Activated CD4-positive, alpha-beta memory T cell treated with anti-CD3 and anti-CD28 coated beads for 36 hours (primary cell): ENCODE measurements at regions of chrX and their contacts with region 1.

Region 1: GRCh38 chrX:68571610-68572311 is 72.9 kb downstream of the YIPF6 start:
- DNase-seq: peak; percentile 35
- H3K4me3 Mint-ChIP-seq: no peak overlapping the region
- H3K27ac Mint-ChIP-seq: peak overlapping the region; percentile 47
- H3K4me1 Mint-ChIP-seq: peaks cover 48% of the 10 kb centered on the region
- H3K27me3 Mint-ChIP-seq: no peaks in the 10 kb centered on the region

Region 2: DNA sequence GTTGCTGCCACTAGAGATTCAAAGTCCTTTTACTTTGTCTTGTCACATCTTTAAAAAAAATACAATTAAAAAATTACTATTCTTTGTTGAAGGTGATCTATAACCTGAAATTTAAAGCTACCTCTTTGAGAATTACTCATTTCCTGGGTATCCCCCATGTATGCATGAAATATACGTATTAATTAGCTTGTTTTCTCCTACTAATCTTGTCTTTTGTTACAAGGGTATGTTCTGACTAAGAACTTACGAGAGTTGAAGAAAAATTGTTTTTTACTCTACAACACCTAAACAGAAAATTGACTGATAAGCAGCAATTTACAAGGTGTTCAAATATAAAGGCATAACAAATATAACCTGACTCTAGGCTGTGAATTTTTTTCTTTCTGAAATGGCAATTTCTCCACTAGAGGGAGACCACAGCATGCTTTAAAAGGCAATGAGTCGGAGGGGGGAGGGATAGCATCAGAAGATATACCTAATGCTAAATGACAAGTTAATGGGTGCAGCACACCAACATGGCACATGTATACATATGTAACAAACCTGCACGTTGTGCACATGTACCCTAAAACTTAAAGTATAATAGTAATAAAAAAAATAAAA is 388.0 kb before region 1 on chrX:
- CTCF ChIA-PET with region 1: interaction called, 4 read pairs
- POLR2A ChIA-PET with region 1: no interaction called
- intact Hi-C with region 1: loop called (anchors 2 kb)
- DNase-seq: no peak
- H3K4me3 Mint-ChIP-seq: no peak overlapping the region
- H3K27ac Mint-ChIP-seq: no peak overlapping the region
- H3K4me1 Mint-ChIP-seq: peaks cover 38% of the 10 kb centered on the region
- H3K27me3 Mint-ChIP-seq: no peaks in the 10 kb centered on the region

Region 3: DNA sequence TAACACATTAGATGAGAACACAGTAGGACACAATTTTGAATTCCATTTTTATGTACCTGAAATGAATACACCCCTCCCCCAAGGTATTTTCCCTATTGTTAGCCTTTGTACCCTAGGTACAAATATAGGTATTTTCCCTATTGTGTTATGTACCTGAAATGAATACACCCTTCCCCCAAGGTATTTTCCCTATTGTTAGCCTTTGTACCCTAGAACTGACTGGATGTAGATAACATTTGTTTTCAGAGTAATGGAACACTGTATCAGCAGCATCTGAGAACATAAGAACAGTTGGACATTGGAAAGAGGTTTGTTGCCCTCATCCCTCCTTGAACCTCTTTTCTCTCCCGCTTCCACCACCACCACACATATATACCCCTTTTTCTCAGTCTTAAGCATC is 35.3 kb before region 1 on chrX:
- CTCF ChIA-PET with region 1: no interaction called
- POLR2A ChIA-PET with region 1: no interaction called
- intact Hi-C with region 1: loop called (anchors 5 kb)
- DNase-seq: no peak
- H3K4me3 Mint-ChIP-seq: no peak overlapping the region
- H3K27ac Mint-ChIP-seq: no peak overlapping the region
- H3K4me1 Mint-ChIP-seq: peaks cover 7% of the 10 kb centered on the region
- H3K27me3 Mint-ChIP-seq: no peaks in the 10 kb centered on the region

Region 4: DNA sequence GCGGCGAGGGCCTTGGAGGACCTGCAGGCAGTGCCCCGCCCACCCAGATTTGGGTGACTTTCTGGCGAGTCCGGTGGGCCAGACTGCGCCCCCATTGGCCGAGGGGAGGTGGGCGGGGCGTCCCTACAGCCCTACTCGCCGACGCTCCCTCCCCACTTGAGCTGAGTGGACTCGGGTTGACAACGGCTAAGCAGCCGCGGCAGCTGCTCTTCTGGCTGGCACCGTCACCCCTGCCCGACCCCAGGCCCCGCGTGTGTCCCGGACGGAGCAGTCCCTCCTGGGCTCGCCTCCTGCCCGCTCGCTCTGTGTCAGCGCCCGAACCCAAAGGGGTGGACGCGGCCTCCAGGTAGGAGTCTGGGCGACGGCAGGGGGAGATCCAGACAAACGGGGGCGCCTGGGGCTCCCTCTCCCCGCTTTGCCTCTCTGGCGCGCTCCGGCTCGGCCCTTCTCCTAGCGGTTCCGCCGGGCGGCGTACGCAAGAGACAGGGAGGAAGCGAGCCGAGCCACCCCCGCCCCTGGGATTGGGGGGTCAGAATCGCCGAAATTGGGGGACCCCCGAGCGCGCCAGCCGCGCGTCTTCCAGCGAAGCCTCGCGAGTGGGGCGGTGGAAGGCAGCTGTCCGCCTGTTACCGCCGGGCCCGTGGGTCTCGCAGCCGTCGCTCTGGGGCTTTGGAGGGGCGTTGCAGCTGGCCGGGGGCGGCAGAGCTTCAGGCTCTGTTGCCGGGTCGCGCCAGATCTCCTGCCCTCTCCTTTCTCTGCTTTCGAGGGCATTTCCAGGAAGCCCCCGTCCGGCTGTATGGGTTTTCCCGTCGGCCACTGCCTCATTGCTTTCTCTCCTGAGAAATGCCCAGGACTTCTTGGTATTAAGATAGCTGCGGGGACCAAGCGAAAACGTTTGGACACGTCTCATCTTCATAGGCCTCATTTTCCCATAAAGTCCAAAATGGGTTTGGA is 122.0 kb after region 1 on chrX:
- CTCF ChIA-PET with region 1: no interaction called
- POLR2A ChIA-PET with region 1: no interaction called
- intact Hi-C with region 1: loop called (anchors 5 kb)
- DNase-seq: peak; percentile 12
- H3K4me3 Mint-ChIP-seq: peak overlapping the region; percentile 39
- H3K27ac Mint-ChIP-seq: no peak overlapping the region
- H3K4me1 Mint-ChIP-seq: peaks cover 6% of the 10 kb centered on the region
- H3K27me3 Mint-ChIP-seq: peaks cover 13% of the 10 kb centered on the region

Region 5: GRCh38 chrX:69165087-69165651 is 593.4 kb after region 1 on chrX and contains the start of gene PJA1:
- CTCF ChIA-PET with region 1: no interaction called
- POLR2A ChIA-PET with region 1: no interaction called
- intact Hi-C with region 1: loop called (anchors 5 kb)
- DNase-seq: peak; percentile 81
- H3K4me3 Mint-ChIP-seq: peak within 1 kb of the TSS; percentile 73
- H3K27ac Mint-ChIP-seq: peak within 1 kb of the TSS; percentile 81
- H3K4me1 Mint-ChIP-seq: peaks cover 36% of the 10 kb centered on the region
- H3K27me3 Mint-ChIP-seq: no peaks in the 10 kb centered on the region
- total RNA-seq, gene PJA1: 20.7 to 22.1 TPM